H1 (cell line): ENCODE measurements at regions of chr18 and their contacts with region 1.

Region 1: DNA sequence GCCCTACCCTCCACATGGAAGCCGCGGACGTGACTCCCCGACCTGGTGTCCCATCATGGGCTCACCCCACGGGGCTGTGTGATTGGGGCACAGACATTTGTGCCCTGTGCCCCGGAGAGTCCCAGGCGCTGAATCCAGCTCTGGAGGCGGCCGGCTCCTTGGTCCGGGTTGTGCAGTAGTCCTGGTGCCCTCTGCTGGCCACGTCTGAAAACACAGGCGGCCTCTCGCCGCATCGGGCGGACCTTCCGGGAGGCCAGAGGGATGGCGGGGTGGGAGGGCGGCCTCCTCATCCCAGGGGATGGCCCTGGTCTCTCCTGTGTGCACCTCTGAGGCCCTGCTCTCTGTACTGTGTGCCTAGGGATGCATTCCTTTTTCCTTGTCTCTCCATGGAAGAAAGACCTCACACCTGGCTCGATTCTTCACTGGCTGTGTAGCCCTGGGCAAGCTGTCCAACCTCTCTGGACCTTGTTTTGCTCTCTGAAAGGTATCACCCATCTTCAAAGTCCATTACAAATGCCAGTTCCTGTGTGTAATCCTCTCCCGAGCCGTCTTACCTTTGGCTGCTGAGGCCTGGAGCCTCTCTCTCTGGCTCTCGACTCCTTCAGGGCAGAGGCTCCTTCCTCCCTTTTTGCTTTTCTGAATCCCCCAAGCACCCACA is 27.6 kb downstream of the CELF4 start:
- DNase-seq: peak in 1 of 2 experiments; percentile 95
- H3K4me3 ChIP-seq: peak overlapping the region in 2 of 4 experiments; percentile 34 to 52; a peak in 3 of 8 replicates
- H3K27ac ChIP-seq: 0 out of 2 replicates have a peak overlapping the region, but pooled peaks have one; percentile 48
- H3K4me1 ChIP-seq: peaks cover 13 to 17% (median 15%) of the 10 kb centered on the region in 4 experiments
- H3K27me3 ChIP-seq: peaks cover 0 to 5% (median 4%) of the 10 kb centered on the region in 4 experiments; a peak in 4 of 7 replicates
- CTCF ChIP-seq: peak; percentile 84 to 90 (median 85)
- EP300 ChIP-seq: no peak
- POLR2A ChIP-seq: 0 out of 3 replicates have a peak, but pooled peaks of 1 of the 2 experiments have one; percentile 2
- RAD21 ChIP-seq: peak; percentile 81 to 89

Region 2: GRCh38 chr18:37422116-37422515 is 115.9 kb before region 1 on chr18:
- CTCF ChIA-PET with region 1: interaction called, 11 read pairs
- POLR2A ChIA-PET with region 1: interaction called, 3 read pairs
- DNase-seq: no peak
- H3K4me3 ChIP-seq: no peak overlapping the region
- H3K27ac ChIP-seq: no peak overlapping the region
- H3K4me1 ChIP-seq: peaks cover 0 to 15% (median 6%) of the 10 kb centered on the region in 4 experiments; a peak in 3 of 7 replicates
- H3K27me3 ChIP-seq: no peaks in the 10 kb centered on the region; a peak in 3 of 7 replicates
- CTCF ChIP-seq: no peak
- EP300 ChIP-seq: no peak
- POLR2A ChIP-seq: no peak
- RAD21 ChIP-seq: no peak

Region 3: GRCh38 chr18:37484983-37485834 is 52.8 kb before region 1 on chr18:
- CTCF ChIA-PET with region 1: interaction called, 93 read pairs
- POLR2A ChIA-PET with region 1: interaction called, 4 read pairs
- DNase-seq: peak; percentile 43 to 77
- H3K4me3 ChIP-seq: peak overlapping the region; percentile 7 to 60 (median 36); a peak in 7 of 8 replicates
- H3K27ac ChIP-seq: no peak overlapping the region
- H3K4me1 ChIP-seq: peaks cover 3 to 33% (median 21%) of the 10 kb centered on the region in 4 experiments
- H3K27me3 ChIP-seq: peaks cover 0 to 34% (median 24%) of the 10 kb centered on the region in 4 experiments; a peak in 6 of 7 replicates
- CTCF ChIP-seq: peak; percentile 57 to 79 (median 66)
- EP300 ChIP-seq: no peak
- POLR2A ChIP-seq: no peak
- RAD21 ChIP-seq: peak in 1 of 2 experiments; percentile 43; a peak in 2 of 4 replicates

Region 4: GRCh38 chr18:37516361-37516853 is 21.6 kb before region 1 on chr18:
- CTCF ChIA-PET with region 1: interaction called, 12 read pairs
- POLR2A ChIA-PET with region 1: no interaction called
- DNase-seq: no peak
- H3K4me3 ChIP-seq: no peak overlapping the region
- H3K27ac ChIP-seq: no peak overlapping the region
- H3K4me1 ChIP-seq: no peaks in the 10 kb centered on the region
- H3K27me3 ChIP-seq: peaks cover 0 to 6% (median 0%) of the 10 kb centered on the region in 4 experiments; a peak in 1 of 7 replicates
- CTCF ChIP-seq: no peak
- EP300 ChIP-seq: no peak
- POLR2A ChIP-seq: no peak
- RAD21 ChIP-seq: no peak

Region 5: GRCh38 chr18:37796823-37797349 is 258.9 kb after region 1 on chr18:
- CTCF ChIA-PET with region 1: no interaction called
- POLR2A ChIA-PET with region 1: no interaction called
- DNase-seq: no peak
- H3K4me3 ChIP-seq: no peak overlapping the region
- H3K27ac ChIP-seq: no peak overlapping the region
- H3K4me1 ChIP-seq: no peaks in the 10 kb centered on the region; a peak in 1 of 7 replicates
- H3K27me3 ChIP-seq: no peaks in the 10 kb centered on the region
- CTCF ChIP-seq: no peak
- EP300 ChIP-seq: no peak
- POLR2A ChIP-seq: no peak
- RAD21 ChIP-seq: no peak